Breast epithelium (tissue), 4 donors: ENCODE measurements at regions of chr3 and their contacts with region 1.

Region 1: DNA sequence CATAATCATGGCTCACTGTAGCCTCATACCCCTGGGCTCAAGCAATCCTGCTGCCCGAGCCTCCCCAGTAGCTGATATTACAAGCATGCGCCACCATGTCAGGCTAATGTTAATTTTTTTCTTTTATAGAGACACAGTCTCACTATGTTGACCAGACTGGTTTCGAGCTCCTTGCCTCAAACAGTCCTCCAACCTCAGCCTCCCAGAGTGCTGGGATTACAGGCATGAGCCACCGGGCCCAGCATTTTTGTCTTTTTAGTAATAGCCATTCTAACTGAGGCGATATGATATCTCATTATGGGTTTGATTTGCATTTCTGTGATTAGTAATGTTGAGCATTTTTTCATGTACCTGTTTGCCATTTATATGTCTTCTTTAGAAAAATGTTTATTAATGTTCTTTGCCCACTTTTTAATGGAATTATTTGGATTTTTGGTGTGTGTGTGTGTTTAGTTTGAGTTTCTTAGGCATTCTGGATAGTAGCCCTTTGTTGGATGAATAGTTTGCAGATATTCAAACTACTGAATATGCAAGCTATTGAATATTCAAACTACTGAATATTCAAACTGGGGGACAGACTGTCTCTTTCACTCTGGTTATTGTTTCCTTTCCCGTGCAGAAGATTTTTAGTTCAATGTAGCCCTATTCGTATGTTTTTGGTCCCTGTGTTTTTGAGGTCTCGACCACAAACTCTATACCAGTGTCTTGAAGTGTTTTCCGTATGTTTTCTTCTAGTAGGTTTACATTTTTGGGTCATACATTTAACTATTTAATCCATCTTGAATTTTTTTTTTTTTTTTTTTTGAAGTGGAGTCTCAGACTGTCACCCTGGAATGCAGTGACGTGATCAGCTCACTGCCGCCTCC is 39.2 kb downstream of the CCDC66 start:
- DNase-seq: no peak
- H3K4me3 ChIP-seq: no peak overlapping the region
- H3K27ac ChIP-seq: no peak overlapping the region
- H3K4me1 ChIP-seq: no peaks in the 10 kb centered on the region
- H3K27me3 ChIP-seq: no peaks in the 10 kb centered on the region
- CTCF ChIP-seq: no peak
- POLR2A ChIP-seq: no peak

Region 2: DNA sequence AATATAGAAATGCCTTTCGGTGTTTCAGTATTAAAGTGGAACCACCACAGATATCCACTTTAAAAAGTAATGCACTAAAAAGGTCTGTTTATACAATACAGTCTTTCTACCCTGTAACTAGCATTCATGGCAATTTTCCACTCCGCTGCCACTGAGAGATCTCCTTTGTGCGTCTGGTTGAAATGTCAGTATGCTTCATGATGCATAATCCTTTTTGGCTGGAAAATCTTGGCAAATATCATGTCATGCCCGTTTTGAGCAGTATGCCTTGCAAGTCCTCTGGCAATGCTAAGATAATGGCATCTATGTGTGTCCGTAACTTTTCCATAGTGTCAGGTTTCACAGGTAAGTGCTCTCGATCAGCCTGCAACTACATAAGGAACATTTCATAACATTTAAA is 1031.8 kb after region 1 on chr3:
- intact Hi-C with region 1: loop called (anchors 5 kb)
- DNase-seq: no peak
- H3K4me3 ChIP-seq: no peak overlapping the region
- H3K27ac ChIP-seq: no peak overlapping the region
- H3K4me1 ChIP-seq: no peaks in the 10 kb centered on the region
- H3K27me3 ChIP-seq: no peaks in the 10 kb centered on the region
- CTCF ChIP-seq: no peak
- POLR2A ChIP-seq: no peak